Heart right ventricle (tissue), 16 donors: ENCODE measurements at regions of chr4 and their contacts with region 1.

Region 1: GRCh38 chr4:159860945-159861344 is 758.1 kb downstream of the RAPGEF2 start:
- DNase-seq: no peak
- ATAC-seq: no peak
- H3K4me3 ChIP-seq: no peak overlapping the region
- H3K27ac ChIP-seq: no peak overlapping the region
- H3K4me1 ChIP-seq: no peaks in the 10 kb centered on the region
- H3K27me3 ChIP-seq: no peaks in the 10 kb centered on the region
- CTCF ChIP-seq: no peak

Region 2: GRCh38 chr4:158667651-158668198 is 1193.2 kb before region 1 on chr4:
- intact Hi-C with region 1: loop called in 1 of 10 experiments (anchors 5 kb)
- DNase-seq: no peak
- ATAC-seq: no peak
- H3K4me3 ChIP-seq: no peak overlapping the region
- H3K27ac ChIP-seq: no peak overlapping the region
- H3K4me1 ChIP-seq: peaks cover 0 to 27% (median 13%) of the 10 kb centered on the region in 9 donors
- H3K27me3 ChIP-seq: no peaks in the 10 kb centered on the region
- CTCF ChIP-seq: peak in 8 of 9 donors; percentile 10 to 54 (median 42)

Region 3: GRCh38 chr4:159747983-159748382 is 113.0 kb before region 1 on chr4:
- intact Hi-C with region 1: no loop called
- DNase-seq: no peak
- ATAC-seq: no peak
- H3K4me3 ChIP-seq: no peak overlapping the region
- H3K27ac ChIP-seq: no peak overlapping the region
- H3K4me1 ChIP-seq: no peaks in the 10 kb centered on the region
- H3K27me3 ChIP-seq: no peaks in the 10 kb centered on the region
- CTCF ChIP-seq: no peak